Activated CD4-positive, alpha-beta T cell treated with anti-CD3 and anti-CD28 coated beads, Interleukin-2, amount 10 ng/mL, durations not matched to agents 7 days and 5 days (primary cell): ENCODE measurements at regions of chr19 and their contacts with region 1.

Region 1: DNA sequence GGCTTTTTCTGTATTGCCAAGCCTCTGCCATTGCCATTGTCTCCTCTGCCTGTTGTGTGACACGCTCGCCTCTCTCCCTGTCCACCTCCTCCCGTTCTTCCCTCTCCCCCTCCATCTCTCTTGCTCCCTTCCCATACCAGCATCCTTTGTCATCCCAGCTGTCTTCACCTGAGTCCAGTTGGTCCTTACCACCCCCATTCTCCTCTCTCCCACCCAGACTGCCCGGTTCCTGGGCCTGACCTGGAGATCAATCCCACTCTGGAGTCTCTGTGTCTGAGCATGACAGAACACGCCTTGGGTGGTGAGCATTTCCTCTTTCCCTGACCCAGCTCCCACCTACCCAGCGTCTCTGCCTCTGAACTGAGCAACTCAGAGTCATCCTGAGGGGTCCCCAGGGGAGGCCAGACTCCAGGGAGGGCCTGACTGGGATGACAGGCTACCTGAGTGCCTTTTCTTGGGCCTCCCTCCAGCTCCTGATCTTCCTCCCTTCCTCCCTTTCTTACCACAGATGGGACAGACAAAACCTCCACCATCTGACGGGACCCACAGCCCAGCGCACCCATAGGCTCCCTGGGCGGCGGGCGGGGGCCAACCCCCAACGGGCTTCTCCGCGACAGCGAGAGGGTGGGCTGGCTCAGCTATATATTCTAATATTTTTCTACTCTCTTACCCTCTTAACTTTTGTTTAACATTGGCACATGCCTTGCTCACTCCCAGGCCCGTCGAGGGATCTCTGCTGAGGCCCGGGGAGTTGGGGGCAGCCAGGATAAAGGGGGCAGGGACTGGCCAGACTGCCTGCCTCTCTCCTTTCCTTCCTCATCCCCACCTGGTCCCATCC is 7.7 kb downstream of the PAF1 start:
- DNase-seq: no peak
- H3K4me3 Mint-ChIP-seq: no peak overlapping the region
- H3K27ac Mint-ChIP-seq: peak overlapping the region; percentile 13
- H3K4me1 Mint-ChIP-seq: peaks cover 5% of the 10 kb centered on the region
- H3K27me3 Mint-ChIP-seq: no peaks in the 10 kb centered on the region

Region 2: DNA sequence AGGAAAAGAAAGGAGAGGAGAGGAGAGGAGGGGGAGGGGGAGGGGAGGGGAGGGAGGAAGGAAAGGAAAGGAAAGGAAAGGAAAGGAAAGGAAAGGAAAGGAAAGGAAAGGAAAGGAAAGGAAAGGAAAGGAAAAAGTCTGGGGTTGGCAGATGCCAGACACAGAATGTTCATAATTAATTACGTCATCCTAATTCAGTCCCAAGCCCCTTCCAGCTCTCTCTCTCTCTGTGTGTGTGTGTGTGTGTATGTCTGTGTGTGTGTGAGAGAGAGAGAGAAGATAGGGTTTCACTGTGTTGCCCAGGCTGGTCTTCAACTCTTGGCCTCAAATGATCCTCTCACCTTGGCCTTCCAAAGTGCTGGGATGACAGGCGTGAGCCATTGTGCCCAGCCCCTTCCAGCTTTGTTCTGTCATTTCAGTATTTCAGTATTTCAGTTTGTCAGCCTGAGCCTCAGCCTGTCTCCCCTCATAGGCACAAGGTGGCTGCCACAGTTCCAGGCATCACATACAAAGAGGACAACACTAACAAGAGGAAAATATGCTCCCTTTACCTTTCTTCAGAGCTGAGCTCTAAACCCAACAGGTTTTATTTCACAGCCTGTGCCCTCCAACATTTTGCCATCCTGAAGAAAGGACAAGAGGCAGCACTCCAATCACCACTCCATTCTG is 153.0 kb before region 1 on chr19:
- CTCF ChIA-PET with region 1: no interaction called
- POLR2A ChIA-PET with region 1: interaction called, 11 read pairs
- DNase-seq: no peak
- H3K4me3 Mint-ChIP-seq: no peak overlapping the region
- H3K27ac Mint-ChIP-seq: no peak overlapping the region
- H3K4me1 Mint-ChIP-seq: no peaks in the 10 kb centered on the region
- H3K27me3 Mint-ChIP-seq: peaks cover 10% of the 10 kb centered on the region

Region 3: DNA sequence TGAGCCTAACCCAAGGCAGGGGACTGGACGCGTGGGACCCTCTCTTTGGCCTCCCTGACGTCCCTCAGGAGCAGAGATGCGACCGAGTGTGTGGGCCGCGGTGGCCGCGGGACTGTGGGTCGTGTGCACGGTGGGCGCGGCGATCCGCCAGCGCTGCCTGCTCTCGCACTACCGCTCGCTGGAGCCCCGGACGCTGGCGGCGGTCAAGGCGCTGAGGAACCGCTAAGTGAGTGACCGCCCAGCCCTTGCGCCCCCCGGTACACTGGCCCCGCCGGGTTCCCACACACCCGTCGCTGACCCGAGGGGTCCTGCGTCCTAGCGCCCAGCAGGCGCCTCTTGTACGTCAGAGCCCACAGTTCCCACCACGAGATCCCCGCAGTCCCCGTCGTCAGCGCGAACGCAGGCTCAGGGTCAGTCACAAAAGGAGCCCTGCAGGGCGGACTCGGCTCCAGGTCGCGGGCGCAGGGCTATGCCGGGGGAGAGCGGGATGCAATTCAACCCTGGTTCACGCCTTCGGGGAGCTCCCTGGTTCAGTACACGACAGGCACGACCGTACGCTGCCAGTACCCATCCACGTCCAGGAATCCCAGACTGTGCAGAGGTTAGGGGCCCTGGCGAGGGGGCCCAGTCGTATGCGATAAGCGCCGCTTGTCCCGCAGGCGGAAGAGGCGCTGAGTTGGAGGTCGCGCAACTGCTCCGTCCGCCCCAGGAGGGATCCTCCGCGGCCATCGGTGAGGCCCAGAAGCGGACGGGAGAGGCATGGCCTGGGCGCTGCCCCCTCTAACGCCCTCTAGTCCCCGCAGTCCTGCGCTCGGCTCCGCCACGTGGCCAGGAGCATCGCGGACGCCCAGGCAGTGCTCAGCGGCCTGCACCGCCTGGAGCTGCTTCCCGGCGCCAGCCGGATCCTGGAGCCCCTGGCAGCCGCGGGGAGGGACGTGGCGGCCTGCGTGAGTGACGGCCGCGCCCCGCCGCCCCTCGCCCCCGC is 118.6 kb before region 1 on chr19:
- CTCF ChIA-PET with region 1: no interaction called
- POLR2A ChIA-PET with region 1: no interaction called
- DNase-seq: no peak
- H3K4me3 Mint-ChIP-seq: no peak overlapping the region
- H3K27ac Mint-ChIP-seq: no peak overlapping the region
- H3K4me1 Mint-ChIP-seq: no peaks in the 10 kb centered on the region
- H3K27me3 Mint-ChIP-seq: peaks cover 42% of the 10 kb centered on the region

Region 4: DNA sequence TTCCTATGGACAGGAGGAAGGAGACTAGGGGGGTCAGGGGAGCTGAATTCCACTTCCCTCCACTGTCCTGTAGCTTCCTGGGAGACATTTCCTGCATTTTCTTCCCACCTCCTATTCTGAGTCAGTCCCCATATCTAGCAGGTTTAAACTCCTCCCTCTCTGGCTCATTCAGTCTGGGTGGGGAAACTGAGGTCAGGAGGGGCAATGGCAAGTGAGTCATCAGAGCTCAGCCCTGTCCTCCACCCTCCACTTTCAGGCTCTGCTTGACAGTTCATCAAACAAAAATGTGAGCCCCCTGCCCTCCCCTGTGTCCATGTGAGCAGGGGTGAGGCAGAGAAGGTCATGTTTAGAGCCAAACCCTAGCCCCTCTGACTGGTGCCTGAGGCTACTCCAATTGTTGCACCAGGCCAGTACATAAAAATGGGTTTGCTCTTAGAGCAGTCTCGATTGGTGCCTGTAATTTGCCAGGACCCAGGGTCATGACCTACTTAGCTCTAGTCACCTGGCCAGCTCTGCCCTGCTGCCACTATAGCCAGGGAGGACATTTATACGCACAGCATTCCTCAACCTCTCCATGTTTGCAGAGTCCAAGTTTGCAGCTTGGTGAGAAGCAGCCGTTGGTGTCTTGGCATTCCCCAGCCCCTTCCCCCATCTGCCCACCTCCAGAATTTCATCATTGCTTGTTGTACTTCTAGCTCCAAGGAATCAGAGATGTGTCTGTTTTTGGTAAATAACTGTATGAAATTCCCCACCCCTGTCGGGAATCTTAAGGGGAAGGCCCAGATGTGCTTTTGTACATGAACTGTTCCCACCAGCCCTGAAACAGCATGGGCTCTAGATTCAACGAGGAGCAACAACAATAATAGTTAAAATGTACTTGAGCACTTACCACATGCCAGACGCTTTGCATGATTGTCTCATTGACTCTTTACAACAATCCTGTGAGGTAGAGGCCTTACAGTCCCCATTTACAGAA is 20.2 kb before region 1 on chr19:
- CTCF ChIA-PET with region 1: no interaction called
- POLR2A ChIA-PET with region 1: no interaction called
- DNase-seq: no peak
- H3K4me3 Mint-ChIP-seq: no peak overlapping the region
- H3K27ac Mint-ChIP-seq: no peak overlapping the region
- H3K4me1 Mint-ChIP-seq: no peaks in the 10 kb centered on the region
- H3K27me3 Mint-ChIP-seq: no peaks in the 10 kb centered on the region